ENCODE measurements at regions of chr20 and their contacts with region 1.

Region 1: GRCh38 chr20:728248-728944 is 39.9 kb downstream of the SLC52A3 start:
- H3K4me3 Mint-ChIP-seq: peak overlapping the region; percentile 57
- H3K27ac Mint-ChIP-seq: no peak overlapping the region
- H3K4me1 Mint-ChIP-seq: peaks cover 18% of the 10 kb centered on the region
- H3K27me3 Mint-ChIP-seq: peaks cover 69% of the 10 kb centered on the region

Region 2: GRCh38 chr20:675453-676314 is 52.7 kb before region 1 on chr20 and contains the start of gene SCRT2:
- intact Hi-C with region 1: loop called (anchors 5 kb)
- H3K4me3 Mint-ChIP-seq: peak within 1 kb of the TSS; percentile 67
- H3K27ac Mint-ChIP-seq: peak within 1 kb of the TSS; percentile 17
- H3K4me1 Mint-ChIP-seq: peaks cover 79% of the 10 kb centered on the region
- H3K27me3 Mint-ChIP-seq: peaks cover 57% of the 10 kb centered on the region